ENCODE measurements at regions of chr13 and their contacts with region 1.

Region 1: GRCh38 chr13:108155185-108156106 is 59.9 kb downstream of the LIG4 start:
- DNase-seq: peak; percentile 36 to 64 (median 43)
- H3K4me3 ChIP-seq: no peak overlapping the region
- H3K4me3 Mint-ChIP-seq: no peak overlapping the region
- H3K27ac ChIP-seq: no peak overlapping the region
- H3K27ac Mint-ChIP-seq: no peak overlapping the region
- H3K4me1 ChIP-seq: no peaks in the 10 kb centered on the region
- H3K4me1 Mint-ChIP-seq: no peaks in the 10 kb centered on the region
- H3K27me3 ChIP-seq: no peaks in the 10 kb centered on the region
- H3K27me3 Mint-ChIP-seq: peaks cover 6 to 9% of the 10 kb centered on the region in 2 donors

Region 2: DNA sequence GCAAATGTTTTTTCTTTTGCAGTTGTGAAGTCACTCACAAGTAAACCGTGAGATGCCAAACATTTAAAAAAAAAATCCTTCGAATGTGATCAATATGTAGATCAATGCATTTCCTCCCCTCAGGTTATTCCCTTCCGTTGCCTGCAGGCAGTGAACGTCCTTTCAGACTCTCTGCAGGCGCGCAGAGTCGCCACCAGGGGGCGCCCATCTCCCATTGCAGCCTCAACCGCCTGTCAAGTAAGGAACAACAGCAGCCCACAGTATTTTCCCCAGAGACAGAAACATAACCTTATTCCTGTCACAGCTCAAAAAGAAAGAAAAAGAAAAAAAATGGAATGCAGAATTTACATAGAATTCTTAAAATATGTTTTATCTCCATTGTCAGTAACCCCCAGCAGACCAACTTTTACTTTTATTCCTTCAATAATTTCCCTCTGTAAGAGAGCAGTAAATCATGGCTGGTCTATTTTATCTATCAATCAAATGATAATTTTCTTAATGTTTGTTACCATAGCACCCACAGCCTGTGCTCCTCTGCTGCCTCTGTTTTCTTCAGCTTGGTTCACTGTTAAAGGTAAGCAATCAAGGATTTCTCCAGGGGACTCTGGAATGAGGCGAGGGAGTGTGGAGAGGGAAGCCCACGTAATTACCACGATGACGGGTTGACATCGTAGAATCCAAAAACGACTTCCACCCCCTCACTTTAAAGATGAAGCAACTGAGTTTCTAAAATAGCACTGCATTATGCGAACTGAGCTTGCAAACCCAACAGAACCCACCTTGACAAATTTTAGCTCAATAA is 949.9 kb before region 1 on chr13:
- CTCF ChIA-PET with region 1: interaction called, 3 read pairs
- POLR2A ChIA-PET with region 1: no interaction called
- intact Hi-C with region 1: loop called (anchors 1 kb)
- DNase-seq: peak in 4 of 5 donors; percentile 30 to 34 (median 32)
- H3K4me3 ChIP-seq: no peak overlapping the region
- H3K4me3 Mint-ChIP-seq: no peak overlapping the region
- H3K27ac ChIP-seq: no peak overlapping the region
- H3K27ac Mint-ChIP-seq: peak overlapping the region in 1 of 7 donors; percentile 38
- H3K4me1 ChIP-seq: no peaks in the 10 kb centered on the region
- H3K4me1 Mint-ChIP-seq: peaks cover 0 to 2% (median under 1%) of the 10 kb centered on the region in 4 donors
- H3K27me3 ChIP-seq: no peaks in the 10 kb centered on the region
- H3K27me3 Mint-ChIP-seq: peaks cover 0 to 3% of the 10 kb centered on the region in 2 donors

Region 3: DNA sequence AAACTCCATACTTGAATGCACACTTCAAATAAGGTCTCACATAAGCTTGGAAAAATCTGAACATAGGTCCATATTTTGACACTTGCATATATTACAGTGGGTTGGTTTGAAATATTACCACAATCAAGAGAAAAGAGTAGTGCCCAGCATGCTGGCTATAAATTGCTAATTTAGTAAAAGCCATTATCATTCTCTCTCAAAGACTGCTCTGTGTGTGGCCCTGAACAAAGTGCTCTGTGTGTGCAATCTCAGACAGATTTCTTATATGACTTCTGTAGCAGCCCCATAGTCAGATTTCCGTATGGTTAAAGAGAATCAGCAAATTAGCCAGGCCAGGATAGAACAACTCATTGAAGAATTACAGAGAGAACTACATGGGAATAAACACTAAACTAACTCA is 18.3 kb before region 1 on chr13:
- CTCF ChIA-PET with region 1: interaction called, 58 read pairs
- POLR2A ChIA-PET with region 1: no interaction called
- intact Hi-C with region 1: no loop called
- DNase-seq: no peak
- H3K4me3 ChIP-seq: no peak overlapping the region
- H3K4me3 Mint-ChIP-seq: no peak overlapping the region
- H3K27ac ChIP-seq: no peak overlapping the region
- H3K27ac Mint-ChIP-seq: no peak overlapping the region
- H3K4me1 ChIP-seq: no peaks in the 10 kb centered on the region
- H3K4me1 Mint-ChIP-seq: no peaks in the 10 kb centered on the region
- H3K27me3 ChIP-seq: no peaks in the 10 kb centered on the region
- H3K27me3 Mint-ChIP-seq: peaks cover 7 to 11% of the 10 kb centered on the region in 2 donors

Region 4: GRCh38 chr13:108166078-108166477 is 10.6 kb after region 1 on chr13:
- CTCF ChIA-PET with region 1: interaction called, 32 read pairs
- POLR2A ChIA-PET with region 1: no interaction called
- intact Hi-C with region 1: no loop called
- DNase-seq: no peak
- H3K4me3 ChIP-seq: no peak overlapping the region
- H3K4me3 Mint-ChIP-seq: no peak overlapping the region
- H3K27ac ChIP-seq: no peak overlapping the region
- H3K27ac Mint-ChIP-seq: no peak overlapping the region
- H3K4me1 ChIP-seq: no peaks in the 10 kb centered on the region
- H3K4me1 Mint-ChIP-seq: no peaks in the 10 kb centered on the region
- H3K27me3 ChIP-seq: no peaks in the 10 kb centered on the region
- H3K27me3 Mint-ChIP-seq: peaks cover 6 to 11% of the 10 kb centered on the region in 2 donors